ENCODE measurements at regions of chr5 and their contacts with region 1.

Region 1: DNA sequence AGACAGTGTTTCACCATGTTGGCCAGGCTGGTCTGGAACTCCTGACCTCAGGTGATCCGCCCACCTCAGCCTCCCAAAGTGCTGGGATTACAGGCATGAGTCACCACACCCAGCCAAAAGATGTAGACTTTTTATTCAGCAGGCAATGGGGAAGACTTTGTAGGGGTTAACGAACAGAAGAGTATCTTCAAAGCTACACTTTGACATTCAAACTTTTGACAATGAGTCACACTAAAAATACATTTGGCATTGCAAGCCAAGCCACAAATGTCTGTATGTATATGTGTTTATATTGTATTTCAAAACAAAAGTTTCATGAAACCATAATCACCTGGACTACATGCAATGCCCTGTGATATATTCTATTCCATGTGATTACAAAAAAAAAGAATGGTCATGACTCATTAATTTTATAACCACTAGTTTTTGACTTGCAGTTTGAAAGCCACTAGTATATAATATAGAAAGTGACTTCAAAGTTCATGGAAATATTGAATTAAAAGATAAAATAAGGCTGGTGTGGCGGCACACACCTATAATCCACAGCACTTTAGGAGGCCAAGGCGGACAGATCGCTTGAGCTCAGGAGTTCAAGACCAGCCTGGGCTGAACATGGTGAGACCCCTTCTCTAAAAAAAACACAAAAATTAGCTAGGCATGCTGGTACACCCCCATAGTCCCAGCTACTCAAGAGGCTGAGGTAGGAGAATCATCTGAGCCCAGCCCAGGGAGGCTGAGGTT is 8.3 kb downstream of the DIMT1 start:
- DNase-seq: peak; percentile 83
- ATAC-seq: peak; percentile 72
- H3K4me3 ChIP-seq: no peak overlapping the region
- H3K27ac ChIP-seq: peak overlapping the region; percentile 67; the same call in 1 of the 2 replicates
- H3K4me1 ChIP-seq: peaks cover 3% of the 10 kb centered on the region; the same call in 1 of the 2 replicates
- H3K27me3 ChIP-seq: no peaks in the 10 kb centered on the region
- CTCF ChIP-seq: no peak
- POLR2A ChIP-seq: no peak
- RAD21 ChIP-seq: no peak

Region 2: DNA sequence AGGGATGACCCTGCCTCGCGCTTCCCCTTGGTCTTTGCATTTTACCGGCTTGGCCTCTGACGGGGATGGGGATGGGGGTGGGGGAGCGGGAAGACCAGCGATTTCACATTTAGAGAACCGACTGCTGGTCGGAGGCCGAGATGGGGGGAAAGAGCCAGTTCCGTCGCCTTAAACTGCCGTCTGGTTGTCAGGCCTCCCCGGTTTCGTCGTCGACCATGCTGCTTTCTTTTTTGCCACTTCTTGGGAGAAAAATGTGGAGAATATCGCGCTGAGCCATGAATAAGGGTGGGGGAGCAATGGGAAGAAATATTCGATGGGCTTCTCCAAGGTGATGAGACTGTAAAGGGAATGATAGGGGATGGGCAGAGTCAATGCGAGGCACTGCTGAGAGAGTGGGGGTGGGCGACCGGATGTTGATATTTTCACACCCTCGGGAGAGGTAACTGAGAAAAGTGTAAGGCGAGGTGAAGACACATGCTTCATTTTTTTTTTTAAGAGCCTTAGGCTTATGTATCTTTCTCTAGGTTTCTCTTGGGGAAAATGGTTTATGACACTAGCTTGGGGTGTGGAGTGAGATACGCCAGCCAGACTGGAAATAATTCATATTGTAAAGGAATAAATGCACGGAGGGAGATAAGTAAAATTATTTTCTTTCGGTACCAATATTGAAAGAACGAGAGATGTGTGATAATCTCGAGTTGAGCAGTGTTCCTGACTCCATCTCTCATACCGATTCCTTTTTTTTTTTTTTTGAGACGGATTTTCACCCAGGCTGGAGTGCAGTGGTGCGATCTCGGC is 88.3 kb before region 1 on chr5:
- CTCF ChIA-PET with region 1: no interaction called
- POLR2A ChIA-PET with region 1: no interaction called
- dilution Hi-C with region 1: no loop called
- in situ Hi-C with region 1: loop called (anchors 5 kb)
- intact Hi-C with region 1: no loop called
- DNase-seq: peak; percentile 35
- ATAC-seq: peak; percentile 3
- H3K4me3 ChIP-seq: peak overlapping the region; percentile 98
- H3K27ac ChIP-seq: peak overlapping the region; percentile 91
- H3K4me1 ChIP-seq: 0 out of 2 replicates have a peak, but pooled peaks cover 2% of the 10 kb centered on the region
- H3K27me3 ChIP-seq: no peaks in the 10 kb centered on the region
- CTCF ChIP-seq: no peak
- POLR2A ChIP-seq: no peak
- RAD21 ChIP-seq: no peak

Region 3: GRCh38 chr5:62376064-62376463 is 19.3 kb before region 1 on chr5:
- CTCF ChIA-PET with region 1: no interaction called
- POLR2A ChIA-PET with region 1: no interaction called
- dilution Hi-C with region 1: no loop called
- in situ Hi-C with region 1: no loop called
- intact Hi-C with region 1: loop called (anchors 2 kb)
- DNase-seq: peak; percentile 3
- ATAC-seq: no peak
- H3K4me3 ChIP-seq: no peak overlapping the region
- H3K27ac ChIP-seq: no peak overlapping the region
- H3K4me1 ChIP-seq: no peaks in the 10 kb centered on the region
- H3K27me3 ChIP-seq: no peaks in the 10 kb centered on the region
- CTCF ChIP-seq: no peak
- POLR2A ChIP-seq: no peak
- RAD21 ChIP-seq: no peak

Region 4: GRCh38 chr5:62720031-62720441 is 324.7 kb after region 1 on chr5:
- CTCF ChIA-PET with region 1: no interaction called
- POLR2A ChIA-PET with region 1: no interaction called
- dilution Hi-C with region 1: no loop called
- in situ Hi-C with region 1: no loop called
- intact Hi-C with region 1: no loop called
- DNase-seq: peak; percentile 21
- ATAC-seq: peak; percentile 56; the same call in 1 of the 2 replicates
- H3K4me3 ChIP-seq: no peak overlapping the region
- H3K27ac ChIP-seq: no peak overlapping the region
- H3K4me1 ChIP-seq: no peaks in the 10 kb centered on the region
- H3K27me3 ChIP-seq: no peaks in the 10 kb centered on the region
- CTCF ChIP-seq: 0 out of 2 replicates have a peak, but pooled peaks have one; percentile 15
- POLR2A ChIP-seq: no peak
- RAD21 ChIP-seq: no peak